Caco-2 (cell line): ENCODE measurements at regions of chr4 and their contacts with region 1.

Region 1: DNA sequence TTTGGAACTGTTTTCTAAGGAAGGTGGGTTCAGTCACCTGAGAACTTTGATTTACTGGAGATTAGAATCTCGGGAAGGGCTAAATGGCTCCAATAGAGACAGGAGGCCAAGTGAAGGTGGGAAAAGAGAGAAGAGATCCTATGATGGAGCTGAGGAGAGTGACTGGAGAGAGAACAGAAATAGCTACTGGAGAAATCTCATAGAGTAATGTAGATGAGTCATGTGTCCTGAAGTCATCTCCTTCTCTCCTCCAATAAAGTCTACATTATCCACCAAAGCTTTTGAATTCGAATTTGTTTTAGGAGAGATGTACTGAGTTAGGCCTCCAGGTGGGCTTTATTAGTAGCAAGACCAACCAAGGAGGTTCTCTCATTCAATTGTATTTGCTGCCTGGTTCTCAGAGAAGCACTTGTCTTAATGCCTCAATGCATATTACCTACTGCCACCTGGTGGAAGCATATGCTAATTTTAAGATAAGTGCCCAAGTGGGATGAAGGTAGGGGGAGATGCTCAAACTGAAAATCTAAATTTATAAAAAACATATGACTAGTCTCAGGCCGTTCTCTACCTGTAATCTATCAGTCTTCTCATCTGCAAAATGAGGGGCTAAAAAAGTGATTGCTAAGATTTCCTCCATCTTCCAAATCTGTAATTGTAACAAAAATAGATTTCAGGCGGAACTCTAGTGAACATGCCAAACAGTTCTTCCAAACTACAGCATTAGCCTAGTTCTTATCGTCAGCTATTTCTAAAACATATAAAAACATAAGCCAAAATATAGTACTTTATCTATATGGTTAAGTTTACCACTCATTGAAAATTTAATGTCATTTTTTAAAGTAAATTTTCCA is 24.4 kb downstream of the TXK start:
- DNase-seq: peak in 1 of 2 experiments; percentile 66
- H3K4me3 ChIP-seq: no peak overlapping the region
- H3K4me3 Mint-ChIP-seq: no peak overlapping the region
- H3K27ac Mint-ChIP-seq: no peak overlapping the region
- H3K4me1 ChIP-seq: no peaks in the 10 kb centered on the region
- H3K4me1 Mint-ChIP-seq: peaks cover 7% of the 10 kb centered on the region
- H3K27me3 ChIP-seq: no peaks in the 10 kb centered on the region
- H3K27me3 Mint-ChIP-seq: no peaks in the 10 kb centered on the region
- CTCF ChIP-seq: peak; percentile 63 to 76

Region 2: GRCh38 chr4:47926639-47927258 is 182.9 kb before region 1 on chr4:
- CTCF ChIA-PET with region 1: interaction called, 3 read pairs
- POLR2A ChIA-PET with region 1: no interaction called
- intact Hi-C with region 1: loop called (anchors 2 kb)
- DNase-seq: peak; percentile 81 to 85
- H3K4me3 ChIP-seq: peak overlapping the region; percentile 44
- H3K4me3 Mint-ChIP-seq: peak overlapping the region; percentile 90
- H3K27ac Mint-ChIP-seq: peak overlapping the region; percentile 83
- H3K4me1 ChIP-seq: peaks cover 10% of the 10 kb centered on the region
- H3K4me1 Mint-ChIP-seq: no peaks in the 10 kb centered on the region
- H3K27me3 ChIP-seq: no peaks in the 10 kb centered on the region
- H3K27me3 Mint-ChIP-seq: no peaks in the 10 kb centered on the region
- CTCF ChIP-seq: peak; percentile 72 to 80

Region 3: DNA sequence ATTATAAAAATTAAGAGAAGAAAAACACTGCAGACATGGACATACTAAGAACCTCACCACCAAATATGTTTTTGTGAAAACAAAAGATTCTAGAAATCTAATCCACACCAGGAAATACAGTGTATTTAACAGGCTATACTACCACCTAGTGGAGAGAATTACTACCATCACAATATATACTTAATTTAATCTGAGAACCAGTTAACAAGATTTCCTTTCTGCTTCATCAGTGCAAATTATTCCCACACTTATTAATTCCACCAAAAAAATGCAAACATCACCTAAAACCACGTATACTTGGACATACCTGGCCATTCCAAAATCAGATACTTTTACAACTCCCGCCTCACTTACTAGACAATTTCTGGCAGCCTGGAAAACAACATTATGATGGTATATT is 31.4 kb after region 1 on chr4:
- CTCF ChIA-PET with region 1: no interaction called
- POLR2A ChIA-PET with region 1: no interaction called
- intact Hi-C with region 1: loop called (anchors 2 kb)
- DNase-seq: peak in 1 of 2 experiments; percentile 18
- H3K4me3 ChIP-seq: no peak overlapping the region
- H3K4me3 Mint-ChIP-seq: no peak overlapping the region
- H3K27ac Mint-ChIP-seq: no peak overlapping the region
- H3K4me1 ChIP-seq: no peaks in the 10 kb centered on the region
- H3K4me1 Mint-ChIP-seq: peaks cover 11% of the 10 kb centered on the region
- H3K27me3 ChIP-seq: no peaks in the 10 kb centered on the region
- H3K27me3 Mint-ChIP-seq: no peaks in the 10 kb centered on the region
- CTCF ChIP-seq: peak; percentile 41 to 71